HepG2 (cell line): ENCODE measurements at regions of chr22 and their contacts with region 1.

Region 1: DNA sequence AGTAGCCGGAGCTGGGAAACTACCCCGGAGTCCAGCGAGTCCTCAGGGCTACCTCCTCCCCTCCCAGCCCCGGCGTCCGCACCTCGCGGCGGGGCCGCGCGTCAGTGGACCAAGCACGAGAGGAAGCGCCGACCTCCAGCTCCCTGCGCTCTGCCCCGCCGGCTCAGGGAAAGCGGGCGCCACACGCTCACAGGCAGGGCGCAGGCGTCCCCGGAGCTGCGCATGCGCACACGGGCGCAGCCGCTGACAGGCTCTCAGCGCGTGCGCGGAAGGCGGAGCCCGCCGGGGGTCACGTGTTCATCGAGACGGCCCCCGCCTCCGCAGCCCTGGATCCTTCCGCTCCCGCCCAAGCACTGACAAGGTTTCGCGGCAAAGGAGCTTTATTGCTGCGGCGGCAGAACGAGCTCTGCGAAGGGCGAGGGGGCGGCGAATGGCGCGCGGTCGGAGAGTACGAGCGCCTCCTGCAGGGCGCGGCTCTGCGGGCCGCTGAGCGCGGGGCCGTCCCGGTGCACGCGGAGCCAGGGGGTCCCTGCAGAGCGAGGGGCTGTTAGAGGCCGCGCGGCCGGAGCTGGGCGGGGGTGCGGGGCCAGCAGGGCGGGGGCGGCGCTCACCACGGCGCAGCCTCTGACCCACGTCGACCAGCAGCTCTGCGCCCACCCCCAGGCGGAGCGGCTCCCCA is at the start of gene SCO2:
- DNase-seq: peak; percentile 90
- ATAC-seq: peak; percentile 54
- H3K4me3 ChIP-seq: peak within 1 kb of the TSS; percentile 70 to 84 (median 83)
- H3K27ac ChIP-seq: peak within 1 kb of the TSS; percentile 94
- H3K4me1 ChIP-seq: peaks cover 53% of the 10 kb centered on the region
- H3K27me3 ChIP-seq: no peaks in the 10 kb centered on the region
- CTCF ChIP-seq: peak; percentile 64
- EP300 ChIP-seq: no peak
- POLR2A ChIP-seq: peak in 1 of 2 experiments; percentile 47; a peak in 1 of 4 replicates
- RAD21 ChIP-seq: peak; percentile 46
- total RNA-seq, gene SCO2: 2.1 and 3.7 TPM in 2 replicates

Region 2: GRCh38 chr22:50485201-50486131 is 40.1 kb before region 1 on chr22:
- CTCF ChIA-PET with region 1: no interaction called
- POLR2A ChIA-PET with region 1: interaction called, 12 read pairs
- in situ Hi-C with region 1: no loop called
- intact Hi-C with region 1: no loop called
- DNase-seq: peak; percentile 35
- ATAC-seq: peak; percentile 55
- H3K4me3 ChIP-seq: peak overlapping the region in 2 of 3 experiments; percentile 30 to 64; a peak in 4 of 6 replicates
- H3K27ac ChIP-seq: peak overlapping the region; percentile 30
- H3K4me1 ChIP-seq: peaks cover 57% of the 10 kb centered on the region
- H3K27me3 ChIP-seq: 0 out of 5 replicates have a peak, but pooled peaks cover 0 to under 1% of the 10 kb centered on the region in 2 experiments
- CTCF ChIP-seq: peak; percentile 37; the same call in 1 of the 2 replicates
- EP300 ChIP-seq: 0 out of 4 replicates have a peak, but pooled peaks of 1 of the 2 experiments have one; percentile 27
- POLR2A ChIP-seq: peak in 1 of 2 experiments; percentile 28; a peak in 1 of 4 replicates
- RAD21 ChIP-seq: no peak

Region 3: GRCh38 chr22:50507991-50508884 is 17.3 kb before region 1 on chr22 and contains the start of gene NCAPH2:
- CTCF ChIA-PET with region 1: no interaction called
- POLR2A ChIA-PET with region 1: interaction called, 97 read pairs
- in situ Hi-C with region 1: no loop called
- intact Hi-C with region 1: loop called (anchors 1 kb)
- DNase-seq: peak; percentile 89
- ATAC-seq: peak; percentile 42
- H3K4me3 ChIP-seq: peak within 1 kb of the TSS; percentile 90 to 99 (median 93)
- H3K27ac ChIP-seq: peak within 1 kb of the TSS; percentile 87
- H3K4me1 ChIP-seq: peaks cover 19% of the 10 kb centered on the region
- H3K27me3 ChIP-seq: no peaks in the 10 kb centered on the region; a peak in 1 of 5 replicates
- CTCF ChIP-seq: peak; percentile 50
- EP300 ChIP-seq: peak; percentile 42 to 53; a peak in 1 of 4 replicates
- POLR2A ChIP-seq: peak; percentile 81 to 87
- RAD21 ChIP-seq: no peak
- total RNA-seq, gene NCAPH2: 44.1 and 64.4 TPM in 2 replicates

Region 4: DNA sequence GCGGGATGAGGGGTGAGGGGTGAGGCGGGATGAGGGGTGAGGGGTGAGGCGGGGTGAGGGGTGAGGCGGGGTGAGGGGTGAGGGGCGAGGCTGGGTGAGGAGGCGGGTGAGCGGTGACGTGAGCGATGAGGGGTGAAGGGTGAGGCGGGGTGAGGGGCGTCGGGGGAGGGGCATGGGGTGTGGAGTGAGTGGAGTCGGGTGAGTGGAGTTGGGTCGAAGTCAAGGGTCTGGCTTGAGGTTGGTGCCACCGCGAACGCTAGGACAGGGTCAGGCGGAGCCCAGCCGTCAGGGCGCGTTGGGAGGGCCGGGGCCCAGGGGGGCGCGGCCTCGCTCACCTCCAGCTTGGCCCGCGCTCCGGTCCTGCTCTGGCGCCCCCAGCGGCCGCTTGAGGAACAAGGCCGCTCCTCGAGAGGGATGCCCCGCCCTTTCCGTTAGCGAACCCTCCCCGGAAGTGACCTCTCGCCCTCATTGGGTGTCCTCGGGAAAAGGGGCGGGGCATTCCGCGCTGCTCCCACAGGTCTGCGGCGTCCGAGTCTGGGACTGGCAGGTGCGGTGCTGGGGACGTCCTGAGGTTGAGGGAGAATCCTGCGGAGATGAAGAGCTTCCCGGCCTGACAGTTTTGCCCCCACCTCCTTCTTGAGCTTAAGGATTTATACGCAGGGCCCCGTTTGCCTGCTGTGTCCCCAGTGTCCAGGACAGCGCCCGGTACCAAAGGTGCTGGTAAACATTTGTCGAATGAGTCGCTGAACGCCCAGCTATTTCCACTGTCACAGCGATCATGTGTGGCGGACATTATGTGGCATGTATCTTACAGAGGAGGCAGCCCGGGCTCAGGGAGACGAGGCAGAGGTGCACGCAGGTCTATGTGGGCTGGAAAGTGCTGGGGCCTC is 37.2 kb after region 1 on chr22 and contains the start of gene SYCE3:
- CTCF ChIA-PET with region 1: no interaction called
- POLR2A ChIA-PET with region 1: interaction called, 36 read pairs
- in situ Hi-C with region 1: loop called (anchors 5 kb)
- intact Hi-C with region 1: loop called (anchors 5 kb)
- DNase-seq: peak; percentile 92
- ATAC-seq: peak; percentile 95
- H3K4me3 ChIP-seq: peak within 1 kb of the TSS; percentile 68 to 85 (median 71)
- H3K27ac ChIP-seq: peak within 1 kb of the TSS; percentile 55
- H3K4me1 ChIP-seq: peaks cover 12% of the 10 kb centered on the region
- H3K27me3 ChIP-seq: peaks cover 0 to 22% of the 10 kb centered on the region in 2 experiments; a peak in 2 of 5 replicates
- CTCF ChIP-seq: peak; percentile 95
- EP300 ChIP-seq: no peak
- POLR2A ChIP-seq: peak; percentile 31 to 86; a peak in 2 of 4 replicates
- RAD21 ChIP-seq: peak; percentile 90
- total RNA-seq, gene SYCE3: not detected in 2 replicates

Region 5: GRCh38 chr22:50582562-50583293 is 57.2 kb after region 1 on chr22 and contains the start of gene CHKB:
- CTCF ChIA-PET with region 1: no interaction called
- POLR2A ChIA-PET with region 1: interaction called, 20 read pairs
- in situ Hi-C with region 1: no loop called
- intact Hi-C with region 1: no loop called
- DNase-seq: peak; percentile 95
- ATAC-seq: peak; percentile 96
- H3K4me3 ChIP-seq: peak within 1 kb of the TSS; percentile 70 to 91 (median 87)
- H3K27ac ChIP-seq: peak within 1 kb of the TSS; percentile 98
- H3K4me1 ChIP-seq: peaks cover 32% of the 10 kb centered on the region
- H3K27me3 ChIP-seq: no peaks in the 10 kb centered on the region
- CTCF ChIP-seq: 0 out of 2 replicates have a peak, but pooled peaks have one; percentile 4
- EP300 ChIP-seq: no peak
- POLR2A ChIP-seq: peak; percentile 61 to 88
- RAD21 ChIP-seq: peak; percentile 46
- total RNA-seq, gene CHKB: 9.9 and 24.5 TPM in 2 replicates

Region 6: DNA sequence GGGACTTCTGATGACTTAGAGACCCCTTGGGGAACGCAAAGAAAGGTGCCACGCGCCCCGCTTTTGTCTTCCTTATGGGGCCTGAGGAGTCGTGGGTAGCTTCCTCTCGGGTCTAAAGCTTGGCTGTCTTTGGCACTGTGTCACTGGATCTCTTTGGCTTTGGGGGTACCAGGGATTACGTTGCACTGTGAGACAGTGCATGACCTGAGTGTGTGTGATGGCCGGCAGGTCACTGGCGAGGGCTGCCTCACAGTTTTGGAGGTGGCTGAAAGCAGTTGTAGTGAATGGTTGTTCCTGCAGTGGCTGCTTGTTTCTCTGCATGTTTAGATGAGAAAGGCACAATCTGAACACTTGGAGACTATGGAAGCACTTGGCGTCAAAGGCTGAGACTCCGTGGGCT is 108.2 kb after region 1 on chr22:
- CTCF ChIA-PET with region 1: no interaction called
- POLR2A ChIA-PET with region 1: no interaction called
- in situ Hi-C with region 1: no loop called
- intact Hi-C with region 1: no loop called
- DNase-seq: no peak
- ATAC-seq: no peak
- H3K4me3 ChIP-seq: no peak overlapping the region
- H3K27ac ChIP-seq: no peak overlapping the region
- H3K4me1 ChIP-seq: peaks cover 15% of the 10 kb centered on the region
- H3K27me3 ChIP-seq: no peaks in the 10 kb centered on the region
- CTCF ChIP-seq: no peak
- EP300 ChIP-seq: no peak
- POLR2A ChIP-seq: no peak
- RAD21 ChIP-seq: no peak

Region 7: DNA sequence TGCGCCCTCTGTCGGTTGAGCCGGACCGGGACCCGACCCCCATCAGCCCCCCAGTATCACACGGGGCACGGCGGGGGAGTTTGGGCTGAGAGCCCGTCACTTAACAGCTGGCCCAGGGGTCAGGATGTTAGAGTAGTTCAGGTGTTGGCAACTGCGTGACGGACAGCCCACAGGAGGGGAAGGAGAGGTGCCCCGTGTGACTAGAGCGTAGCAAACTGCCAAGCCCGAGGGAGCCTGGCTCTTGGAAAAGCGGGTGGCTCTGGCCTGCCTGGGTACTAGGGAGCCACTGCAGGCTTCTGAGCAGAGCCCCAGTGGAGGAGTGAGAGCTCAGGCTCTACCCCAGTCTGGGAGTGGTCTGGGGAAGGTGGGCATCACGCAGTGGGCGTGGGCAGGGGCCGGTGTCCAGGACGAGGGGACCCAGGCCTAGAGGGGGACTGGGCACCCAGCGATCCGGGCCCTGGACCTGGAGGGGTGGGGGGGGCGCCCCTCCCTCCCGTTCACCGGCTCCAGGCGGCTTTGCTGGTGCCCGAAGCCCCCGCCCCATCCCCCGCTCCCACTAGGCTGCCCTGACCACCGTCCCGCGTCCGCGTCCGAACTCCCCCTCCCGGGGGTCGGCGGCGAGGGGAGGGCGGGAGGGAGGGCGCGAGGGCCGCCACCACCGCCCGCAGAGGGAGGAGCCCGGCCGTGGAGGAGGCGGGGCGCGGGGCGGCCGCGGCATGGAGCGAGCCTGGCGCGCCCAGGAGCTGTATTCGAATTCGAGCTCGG is 171.4 kb after region 1 on chr22:
- CTCF ChIA-PET with region 1: no interaction called
- POLR2A ChIA-PET with region 1: interaction called, 21 read pairs
- in situ Hi-C with region 1: no loop called
- intact Hi-C with region 1: no loop called
- DNase-seq: no peak
- ATAC-seq: no peak
- H3K4me3 ChIP-seq: peak overlapping the region in 2 of 3 experiments; percentile 82 to 89; a peak in 3 of 6 replicates
- H3K27ac ChIP-seq: no peak overlapping the region
- H3K4me1 ChIP-seq: peaks cover 42% of the 10 kb centered on the region
- H3K27me3 ChIP-seq: no peaks in the 10 kb centered on the region
- CTCF ChIP-seq: no peak
- EP300 ChIP-seq: no peak
- POLR2A ChIP-seq: no peak
- RAD21 ChIP-seq: no peak